GM13976 (cell line): ENCODE measurements at regions of chrX and their contacts with region 1.

Region 1: GRCh38 chrX:121579016-121579760 is 531.8 kb downstream of the GLUD2 start:
- DNase-seq: no peak
- CTCF ChIP-seq: peak; percentile 49

Region 2: GRCh38 chrX:120781403-120781802 is 797.8 kb before region 1 on chrX:
- in situ Hi-C with region 1: loop called (anchors 10 kb)
- DNase-seq: no peak
- CTCF ChIP-seq: no peak

Region 3: GRCh38 chrX:121308276-121308805 is 270.8 kb before region 1 on chrX:
- in situ Hi-C with region 1: loop called (anchors 25 kb)
- DNase-seq: peak; percentile 22
- CTCF ChIP-seq: peak; percentile 46